GM12878 (cell line): ENCODE measurements at regions of chr16 and their contacts with region 1.

Region 1: GRCh38 chr16:14070877-14071575 is at the start of gene MRTFB:
- DNase-seq: peak; percentile 25
- ATAC-seq: peak; percentile 93
- H3K4me3 ChIP-seq: peak within 1 kb of the TSS; percentile 98
- H3K27ac ChIP-seq: peak within 1 kb of the TSS; percentile 64
- H3K4me1 ChIP-seq: peaks cover 2% of the 10 kb centered on the region; the same call in 1 of the 2 replicates
- H3K27me3 ChIP-seq: no peaks in the 10 kb centered on the region
- CTCF ChIP-seq: no peak
- EP300 ChIP-seq: no peak
- POLR2A ChIP-seq: peak; percentile 69
- RAD21 ChIP-seq: no peak
- polyA plus RNA-seq, gene MRTFB: 2.1 to 4.0 TPM

Region 2: GRCh38 chr16:13957197-13958078 is 113.6 kb before region 1 on chr16:
- CTCF ChIA-PET with region 1: no interaction called
- POLR2A ChIA-PET with region 1: no interaction called
- RAD21 ChIA-PET with region 1: no interaction called
- SMC1A ChIA-PET with region 1: no interaction called
- in situ Hi-C with region 1: no loop called
- intact Hi-C with region 1: loop called (anchors 5 kb)
- DNase-seq: peak; percentile 56
- ATAC-seq: peak; percentile 84
- H3K4me3 ChIP-seq: peak overlapping the region; percentile 70
- H3K27ac ChIP-seq: peak overlapping the region; percentile 85
- H3K4me1 ChIP-seq: peaks cover 29% of the 10 kb centered on the region
- H3K27me3 ChIP-seq: no peaks in the 10 kb centered on the region
- CTCF ChIP-seq: no peak
- EP300 ChIP-seq: peak; percentile 28 to 31; a peak in 3 of 4 replicates
- POLR2A ChIP-seq: 0 out of 2 replicates have a peak, but pooled peaks have one; percentile 18
- RAD21 ChIP-seq: no peak

Region 3: DNA sequence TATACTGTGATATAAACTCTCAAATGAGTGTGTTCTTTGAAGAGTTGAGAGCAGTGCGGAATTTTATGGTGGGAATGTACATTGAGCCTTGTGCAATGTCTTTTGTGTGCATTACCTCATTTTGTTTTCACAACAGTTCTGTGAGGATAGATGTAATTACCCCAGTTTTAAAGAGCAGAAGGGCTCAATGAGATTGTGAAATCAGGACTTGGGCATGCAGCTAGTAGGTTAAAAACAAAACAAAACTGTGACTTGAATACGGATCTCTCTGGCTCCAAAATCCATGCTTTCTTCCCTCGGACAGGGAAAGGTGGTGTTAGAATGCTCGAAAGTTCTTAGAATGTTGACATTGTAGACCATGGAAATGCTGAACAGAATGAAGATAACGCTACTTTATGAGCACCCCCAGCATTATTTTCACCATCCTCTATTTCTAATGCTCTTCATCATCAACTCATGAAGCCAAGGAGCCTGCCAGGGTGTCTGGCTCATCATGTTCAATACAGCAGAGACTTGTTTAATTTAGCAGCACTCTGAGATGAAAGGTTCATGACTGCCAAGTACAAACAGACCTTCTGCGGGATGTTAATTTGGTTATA is 17.2 kb after region 1 on chr16:
- CTCF ChIA-PET with region 1: no interaction called
- POLR2A ChIA-PET with region 1: no interaction called
- RAD21 ChIA-PET with region 1: no interaction called
- SMC1A ChIA-PET with region 1: no interaction called
- in situ Hi-C with region 1: no loop called
- intact Hi-C with region 1: no loop called
- DNase-seq: no peak
- ATAC-seq: no peak
- H3K4me3 ChIP-seq: no peak overlapping the region
- H3K27ac ChIP-seq: no peak overlapping the region
- H3K4me1 ChIP-seq: no peaks in the 10 kb centered on the region
- H3K27me3 ChIP-seq: no peaks in the 10 kb centered on the region
- CTCF ChIP-seq: no peak
- EP300 ChIP-seq: no peak
- POLR2A ChIP-seq: no peak
- RAD21 ChIP-seq: no peak

Region 4: GRCh38 chr16:14121142-14121541 is 50.1 kb after region 1 on chr16:
- CTCF ChIA-PET with region 1: no interaction called
- POLR2A ChIA-PET with region 1: no interaction called
- RAD21 ChIA-PET with region 1: no interaction called
- SMC1A ChIA-PET with region 1: no interaction called
- in situ Hi-C with region 1: no loop called
- intact Hi-C with region 1: loop called (anchors 5 kb)
- DNase-seq: peak; percentile 28
- ATAC-seq: peak; percentile 67
- H3K4me3 ChIP-seq: peak overlapping the region; percentile 16; the same call in 1 of the 2 replicates
- H3K27ac ChIP-seq: peak overlapping the region; percentile 29; the same call in 1 of the 2 replicates
- H3K4me1 ChIP-seq: peaks cover 9% of the 10 kb centered on the region
- H3K27me3 ChIP-seq: no peaks in the 10 kb centered on the region
- CTCF ChIP-seq: no peak
- EP300 ChIP-seq: peak in 1 of 2 experiments; percentile 24; a peak in 1 of 4 replicates
- POLR2A ChIP-seq: no peak
- RAD21 ChIP-seq: no peak

Region 5: DNA sequence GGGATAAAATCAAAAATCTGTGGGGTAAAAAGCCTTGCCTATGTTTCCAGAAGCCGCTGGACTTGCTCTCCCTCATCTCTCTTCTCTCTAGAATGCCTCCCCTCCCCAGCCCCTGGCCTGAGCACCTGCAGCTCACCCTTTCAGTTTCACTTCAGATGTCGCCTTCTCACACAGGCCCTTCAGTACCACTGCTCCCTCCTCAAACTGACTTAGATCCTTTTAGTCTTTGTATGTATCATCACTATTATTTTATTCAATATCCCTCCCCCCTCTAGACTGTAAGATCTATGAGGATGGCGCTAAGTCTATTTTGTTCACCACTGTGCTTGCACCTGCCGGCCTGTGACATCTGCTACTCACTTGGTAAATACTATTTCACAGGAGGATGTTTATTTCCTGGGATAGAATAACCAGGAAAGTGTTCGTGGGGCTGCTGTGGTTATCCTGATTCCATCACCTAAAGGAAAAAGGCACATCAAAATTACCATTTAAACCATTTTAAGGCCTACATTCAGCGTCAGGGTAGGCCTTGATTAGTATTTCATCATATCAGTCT is 122.4 kb after region 1 on chr16:
- CTCF ChIA-PET with region 1: no interaction called
- POLR2A ChIA-PET with region 1: no interaction called
- RAD21 ChIA-PET with region 1: no interaction called
- SMC1A ChIA-PET with region 1: no interaction called
- in situ Hi-C with region 1: no loop called
- intact Hi-C with region 1: loop called (anchors 5 kb)
- DNase-seq: peak; percentile 21
- ATAC-seq: peak; percentile 98
- H3K4me3 ChIP-seq: peak overlapping the region; percentile 16
- H3K27ac ChIP-seq: peak overlapping the region; percentile 74
- H3K4me1 ChIP-seq: peaks cover 19% of the 10 kb centered on the region
- H3K27me3 ChIP-seq: no peaks in the 10 kb centered on the region
- CTCF ChIP-seq: no peak
- EP300 ChIP-seq: no peak
- POLR2A ChIP-seq: peak; percentile 43; the same call in 1 of the 2 replicates
- RAD21 ChIP-seq: no peak

Region 6: DNA sequence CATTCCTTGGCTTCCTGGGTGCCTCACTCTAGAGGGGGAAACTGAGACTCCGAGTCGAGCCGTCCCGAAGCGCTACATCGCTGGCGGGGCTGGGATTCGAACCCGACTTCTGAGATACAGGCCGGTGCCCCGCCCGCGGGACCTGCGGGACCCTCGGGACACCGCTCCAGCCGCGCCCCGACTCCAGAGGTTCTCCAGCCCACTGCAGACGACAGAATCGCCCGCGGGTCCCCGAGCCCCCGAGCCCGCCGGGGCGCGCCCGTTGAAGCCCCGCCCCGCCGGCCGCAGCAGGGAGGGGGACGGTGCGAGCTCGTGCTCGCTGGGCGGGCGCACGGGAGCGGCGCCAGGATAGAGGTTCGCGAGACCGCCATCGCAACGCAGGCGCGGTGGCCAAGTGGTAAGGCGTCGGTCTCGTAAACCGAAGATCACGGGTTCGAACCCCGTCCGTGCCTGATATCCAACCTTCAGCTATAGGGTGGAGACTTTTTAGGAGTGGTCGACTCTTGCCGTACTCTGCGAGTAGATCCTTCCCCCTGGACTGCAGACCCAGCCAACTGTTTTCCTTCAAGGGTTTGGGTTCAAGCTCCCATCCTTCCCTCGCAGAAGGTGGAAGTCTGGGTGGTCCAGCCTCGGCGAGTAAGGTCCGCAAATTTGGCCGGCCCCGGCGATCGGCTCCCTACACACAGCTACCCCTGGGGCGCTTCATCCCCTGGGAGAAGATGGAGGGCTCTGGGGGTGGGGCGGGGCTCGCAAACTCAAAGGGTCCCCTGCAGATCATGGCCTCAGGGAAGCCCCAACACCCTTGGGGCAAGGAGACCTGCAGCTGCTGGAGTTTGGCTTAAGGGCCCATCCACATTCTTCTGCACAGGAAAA is 214.7 kb after region 1 on chr16:
- CTCF ChIA-PET with region 1: no interaction called
- POLR2A ChIA-PET with region 1: no interaction called
- RAD21 ChIA-PET with region 1: no interaction called
- SMC1A ChIA-PET with region 1: interaction called, 3 read pairs
- in situ Hi-C with region 1: no loop called
- intact Hi-C with region 1: loop called (anchors 2 kb)
- DNase-seq: peak; percentile 87
- ATAC-seq: peak; percentile 89
- H3K4me3 ChIP-seq: peak overlapping the region; percentile 89
- H3K27ac ChIP-seq: peak overlapping the region; percentile 76
- H3K4me1 ChIP-seq: peaks cover 8% of the 10 kb centered on the region
- H3K27me3 ChIP-seq: no peaks in the 10 kb centered on the region
- CTCF ChIP-seq: no peak
- EP300 ChIP-seq: peak; percentile 10 to 49; a peak in 1 of 4 replicates
- POLR2A ChIP-seq: no peak
- RAD21 ChIP-seq: no peak